Testis (tissue), 5 donors: ENCODE measurements at regions of chr14 and their contacts with region 1.

Region 1: DNA sequence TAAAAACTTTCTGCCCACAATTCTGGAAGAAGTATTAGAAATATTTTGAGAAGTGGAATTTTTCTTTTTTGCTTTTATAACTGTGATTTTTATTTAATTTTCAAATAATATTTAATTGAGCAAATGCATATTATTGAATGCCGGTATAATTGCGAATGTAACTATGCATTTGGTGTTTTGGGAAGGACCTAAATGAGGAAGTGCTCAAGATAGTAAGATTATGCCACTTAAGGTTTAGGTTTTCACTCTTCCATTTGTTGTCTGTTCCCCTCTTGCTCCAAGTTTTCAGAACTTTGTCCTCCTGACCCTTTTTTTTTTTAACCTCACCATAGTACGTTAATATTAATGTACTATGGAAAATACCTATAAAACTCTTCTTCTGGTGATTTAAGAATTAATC is 85.8 kb downstream of the KIAA0586 start:
- DNase-seq: no peak
- H3K4me3 ChIP-seq: no peak overlapping the region
- H3K27ac ChIP-seq: no peak overlapping the region
- H3K4me1 ChIP-seq: no peaks in the 10 kb centered on the region
- H3K27me3 ChIP-seq: no peaks in the 10 kb centered on the region
- CTCF ChIP-seq: no peak
- POLR2A ChIP-seq: no peak

Region 2: GRCh38 chr14:59055439-59056045 is 542.3 kb after region 1 on chr14:
- intact Hi-C with region 1: loop called (anchors 5 kb)
- DNase-seq: peak; percentile 44
- H3K4me3 ChIP-seq: no peak overlapping the region
- H3K27ac ChIP-seq: no peak overlapping the region
- H3K4me1 ChIP-seq: no peaks in the 10 kb centered on the region
- H3K27me3 ChIP-seq: no peaks in the 10 kb centered on the region
- CTCF ChIP-seq: peak; percentile 26 to 64 (median 58)
- POLR2A ChIP-seq: no peak